ENCODE measurements at regions of chr3 and their contacts with region 1.

Region 1: GRCh38 chr3:56980798-56981390 is 79.6 kb upstream of the SPATA12 start:
- DNase-seq: peak; percentile 88
- H3K4me3 ChIP-seq: no peak overlapping the region
- CTCF ChIP-seq: no peak

Region 2: GRCh38 chr3:56702490-56703315 is 278.2 kb before region 1 on chr3:
- CTCF ChIA-PET with region 1: interaction called, 376 read pairs
- POLR2A ChIA-PET with region 1: no interaction called
- DNase-seq: peak; percentile 41
- H3K4me3 ChIP-seq: no peak overlapping the region
- CTCF ChIP-seq: peak; percentile 58

Measured in AG04449 (cell line).